Posterior vena cava (tissue), 2 donors: ENCODE measurements at regions of chr3 and their contacts with region 1.

Region 1: DNA sequence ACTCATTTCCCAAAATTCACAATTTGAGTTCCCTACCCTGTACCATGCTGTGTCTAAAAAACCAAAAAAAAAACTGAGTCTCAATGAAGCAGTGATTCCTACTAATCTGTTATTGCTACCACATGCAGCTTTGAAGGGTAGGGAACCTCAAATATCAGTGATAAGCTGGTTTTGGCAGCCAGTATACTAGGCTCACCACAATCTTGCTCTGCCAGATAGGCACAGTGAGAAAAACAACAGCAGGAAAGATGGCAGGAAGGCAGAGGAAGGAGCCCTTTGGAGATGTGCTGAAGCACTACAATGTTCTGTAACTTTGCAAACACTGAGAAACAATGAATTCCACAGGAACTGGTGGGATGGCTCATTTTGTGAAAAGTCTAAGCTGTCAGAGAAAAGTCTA is 96.9 kb upstream of the UBP1 start:
- DNase-seq: no peak

Region 2: GRCh38 chr3:33505027-33505426 is 32.1 kb before region 1 on chr3:
- intact Hi-C with region 1: loop called in 1 of 2 experiments (anchors 2 kb)
- DNase-seq: no peak